Dendritic cell treated with granulocyte-macrophage colony-stimulating factor and Interleukin-4, amounts not matched to agents 40 ng/mL and 50 ng/mL, for 4 days (primary cell): ENCODE measurements at regions of chr7 and their contacts with region 1.

Region 1: GRCh38 chr7:7595451-7595850 is 28.8 kb downstream of the MIOS start:
- H3K4me3 Mint-ChIP-seq: no peak overlapping the region
- H3K27ac Mint-ChIP-seq: no peak overlapping the region
- H3K4me1 Mint-ChIP-seq: no peaks in the 10 kb centered on the region
- H3K27me3 Mint-ChIP-seq: no peaks in the 10 kb centered on the region

Region 2: DNA sequence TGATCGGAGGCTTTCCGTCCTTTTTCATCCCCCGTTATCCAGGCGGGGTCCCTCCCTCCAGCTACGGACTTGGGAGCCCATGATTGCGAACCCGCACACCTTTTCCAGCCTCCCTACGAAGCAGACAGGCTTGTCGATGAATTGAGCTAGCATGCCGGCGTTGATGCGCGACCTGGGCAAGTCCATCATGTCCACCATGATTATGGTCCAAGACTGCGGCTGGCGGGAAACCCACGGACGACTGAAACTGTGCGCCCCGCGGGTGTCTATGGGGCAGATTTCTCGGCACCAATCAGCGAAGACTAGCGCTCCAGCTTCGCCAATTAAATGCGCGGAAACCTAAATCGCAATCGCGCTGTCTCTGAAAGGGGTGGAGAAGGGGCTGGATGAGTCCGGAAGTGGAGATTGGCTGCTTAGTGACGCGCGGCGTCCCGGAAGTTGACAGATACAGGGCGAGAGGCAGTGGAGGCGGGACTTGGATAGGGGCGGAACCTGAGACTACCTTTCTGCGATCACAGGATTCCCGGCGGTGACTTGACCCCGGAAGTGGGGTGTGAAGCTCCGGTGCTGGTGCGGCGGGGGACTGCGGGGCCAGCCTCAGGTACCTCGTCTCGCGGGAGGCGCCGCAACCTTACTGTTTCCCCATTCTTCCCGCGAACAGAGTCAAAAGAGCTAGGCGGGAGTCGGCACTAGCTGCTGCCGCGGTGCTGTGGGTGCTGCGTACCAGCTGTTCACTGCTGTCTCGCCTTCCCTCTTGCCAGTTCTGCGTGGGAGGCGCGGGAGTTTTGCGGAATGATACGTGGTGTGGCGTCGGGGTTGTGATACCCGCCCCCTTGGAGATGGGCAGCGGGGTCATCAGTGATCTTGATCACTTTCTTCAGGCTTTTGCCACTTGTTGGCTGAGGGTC is 45.0 kb after region 1 on chr7 and contains the start of gene UMAD1:
- intact Hi-C with region 1: no loop called
- H3K4me3 Mint-ChIP-seq: peak within 1 kb of the TSS; percentile 94
- H3K27ac Mint-ChIP-seq: peak within 1 kb of the TSS; percentile 95
- H3K4me1 Mint-ChIP-seq: peaks cover 21% of the 10 kb centered on the region
- H3K27me3 Mint-ChIP-seq: no peaks in the 10 kb centered on the region

Region 3: GRCh38 chr7:7761340-7761980 is 166.0 kb after region 1 on chr7:
- intact Hi-C with region 1: loop called (anchors 5 kb)
- H3K4me3 Mint-ChIP-seq: peak overlapping the region; percentile 76
- H3K27ac Mint-ChIP-seq: peak overlapping the region; percentile 49
- H3K4me1 Mint-ChIP-seq: peaks cover 13% of the 10 kb centered on the region
- H3K27me3 Mint-ChIP-seq: no peaks in the 10 kb centered on the region

Region 4: DNA sequence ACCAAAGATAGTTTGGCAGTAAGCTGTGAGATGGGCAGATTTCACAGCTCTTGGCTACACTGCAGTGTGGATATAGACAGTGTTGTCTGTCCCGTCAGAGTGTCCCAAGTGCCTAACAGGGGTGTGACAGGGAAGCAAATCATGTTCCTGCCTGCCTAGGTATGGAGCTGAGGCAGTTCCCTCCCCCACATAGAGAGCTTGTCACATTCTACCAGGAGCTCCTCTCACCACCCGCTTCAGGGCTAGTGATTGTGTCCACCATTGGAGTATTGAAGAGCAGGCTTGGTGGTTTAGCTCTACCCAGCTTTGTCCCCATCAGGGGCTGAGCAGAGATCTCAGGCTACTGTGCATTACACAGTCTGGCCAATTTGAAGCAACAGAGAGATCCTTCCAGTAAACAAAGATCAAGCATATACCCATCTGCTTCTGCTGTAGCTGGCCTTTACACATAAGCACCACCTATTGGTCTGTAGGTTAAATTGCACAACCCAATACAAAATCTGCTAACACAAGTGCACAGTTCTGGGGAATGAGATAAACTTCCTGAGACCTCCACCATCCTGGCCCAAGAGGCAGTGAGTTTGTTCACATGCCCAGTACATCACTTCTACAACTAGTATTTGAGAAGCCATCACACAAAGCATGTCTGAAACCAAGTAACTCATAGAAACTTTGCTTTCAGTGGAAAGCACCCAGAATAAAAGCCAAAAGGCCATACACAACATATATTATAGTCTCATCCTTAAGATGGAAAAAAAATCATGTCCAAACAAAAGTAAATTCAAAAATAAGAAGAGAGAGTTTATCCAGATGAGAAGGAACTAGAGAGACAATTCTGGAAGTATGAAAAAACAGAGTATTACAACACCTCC is 440.4 kb after region 1 on chr7:
- intact Hi-C with region 1: loop called (anchors 10 kb)
- H3K4me3 Mint-ChIP-seq: no peak overlapping the region
- H3K27ac Mint-ChIP-seq: no peak overlapping the region
- H3K4me1 Mint-ChIP-seq: no peaks in the 10 kb centered on the region
- H3K27me3 Mint-ChIP-seq: no peaks in the 10 kb centered on the region

Region 5: GRCh38 chr7:8190119-8190895 is 594.9 kb after region 1 on chr7:
- intact Hi-C with region 1: loop called (anchors 5 kb)
- H3K4me3 Mint-ChIP-seq: no peak overlapping the region
- H3K27ac Mint-ChIP-seq: no peak overlapping the region
- H3K4me1 Mint-ChIP-seq: peaks cover 11% of the 10 kb centered on the region
- H3K27me3 Mint-ChIP-seq: no peaks in the 10 kb centered on the region

Region 6: DNA sequence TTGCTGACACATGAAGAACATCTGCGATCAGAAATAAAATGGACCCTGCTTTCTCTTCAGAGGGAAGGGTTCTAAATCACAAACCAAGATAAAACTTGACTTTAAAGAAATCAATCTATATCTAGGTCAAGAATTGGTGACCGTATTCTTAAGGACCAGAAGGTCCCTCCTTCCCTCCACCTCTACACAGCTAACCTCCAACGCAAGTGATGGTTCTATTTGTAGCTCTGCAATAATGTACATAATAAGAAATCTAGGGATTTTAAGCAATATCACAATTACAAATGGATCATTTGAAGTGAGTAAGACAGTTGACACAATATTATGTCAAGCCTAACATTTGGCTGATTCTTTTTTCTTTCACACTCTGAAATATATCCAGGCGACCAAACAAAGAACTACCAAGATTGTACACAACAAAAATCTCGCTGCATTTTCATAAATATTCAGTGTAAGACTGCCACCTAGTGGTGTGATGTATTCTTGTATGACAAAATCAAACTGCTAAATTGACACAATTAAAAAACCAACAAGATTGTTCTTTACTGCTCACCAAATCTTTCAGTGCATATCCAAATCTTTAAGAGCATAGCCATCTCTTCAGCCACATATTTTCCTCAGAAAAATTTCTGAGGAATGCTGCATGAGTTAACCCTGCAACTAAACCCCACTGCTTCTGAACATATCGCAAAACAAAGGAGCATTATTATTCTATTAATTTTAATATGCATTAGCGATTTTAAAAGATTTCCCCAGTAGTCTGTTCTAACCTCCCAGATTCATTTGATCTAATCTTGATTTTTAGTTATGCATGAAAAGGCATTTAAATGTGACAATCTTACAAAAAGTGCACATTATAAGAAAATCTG is 622.0 kb after region 1 on chr7:
- intact Hi-C with region 1: loop called (anchors 1 kb)
- H3K4me3 Mint-ChIP-seq: no peak overlapping the region
- H3K27ac Mint-ChIP-seq: no peak overlapping the region
- H3K4me1 Mint-ChIP-seq: no peaks in the 10 kb centered on the region
- H3K27me3 Mint-ChIP-seq: no peaks in the 10 kb centered on the region

Region 7: DNA sequence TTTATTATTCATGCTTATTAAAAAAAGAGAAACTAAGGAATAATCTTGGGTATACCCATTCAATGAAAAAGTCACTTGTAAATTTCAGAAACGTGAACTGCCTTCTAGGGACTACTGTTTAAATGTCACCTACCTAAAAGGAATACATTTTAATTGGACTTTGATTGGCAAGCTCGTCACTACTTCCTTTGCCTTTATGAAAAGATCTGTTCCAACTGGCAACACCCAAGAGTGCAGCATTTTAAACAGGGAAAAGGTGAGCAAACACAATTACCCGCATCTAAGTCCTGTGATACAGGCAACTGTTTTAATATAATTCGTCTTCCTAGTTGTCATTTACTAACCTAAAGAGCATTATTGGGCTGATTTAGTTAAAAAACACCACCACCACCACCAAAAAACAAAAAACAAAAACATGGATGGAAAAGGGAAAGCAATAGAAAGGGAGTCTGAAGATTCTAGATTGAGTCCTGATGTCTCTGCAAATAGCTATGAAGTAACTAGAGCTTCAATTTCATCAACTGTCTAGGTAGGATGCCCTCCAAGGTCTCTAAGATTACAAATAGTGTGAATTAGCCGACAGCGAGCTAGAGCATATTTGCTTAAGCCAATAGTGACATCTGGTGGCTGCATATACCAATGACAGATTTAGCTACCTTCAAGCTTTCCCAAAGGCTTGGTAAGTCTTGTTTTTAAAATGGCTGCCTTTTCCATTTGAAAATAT is 700.3 kb after region 1 on chr7:
- intact Hi-C with region 1: loop called (anchors 10 kb)
- H3K4me3 Mint-ChIP-seq: no peak overlapping the region
- H3K27ac Mint-ChIP-seq: no peak overlapping the region
- H3K4me1 Mint-ChIP-seq: no peaks in the 10 kb centered on the region
- H3K27me3 Mint-ChIP-seq: peaks cover 3% of the 10 kb centered on the region